Activated CD4-positive, alpha-beta T cell treated with anti-CD3 and anti-CD28 coated beads for 36 hours (primary cell): ENCODE measurements at regions of chr2 and their contacts with region 1.

Region 1: DNA sequence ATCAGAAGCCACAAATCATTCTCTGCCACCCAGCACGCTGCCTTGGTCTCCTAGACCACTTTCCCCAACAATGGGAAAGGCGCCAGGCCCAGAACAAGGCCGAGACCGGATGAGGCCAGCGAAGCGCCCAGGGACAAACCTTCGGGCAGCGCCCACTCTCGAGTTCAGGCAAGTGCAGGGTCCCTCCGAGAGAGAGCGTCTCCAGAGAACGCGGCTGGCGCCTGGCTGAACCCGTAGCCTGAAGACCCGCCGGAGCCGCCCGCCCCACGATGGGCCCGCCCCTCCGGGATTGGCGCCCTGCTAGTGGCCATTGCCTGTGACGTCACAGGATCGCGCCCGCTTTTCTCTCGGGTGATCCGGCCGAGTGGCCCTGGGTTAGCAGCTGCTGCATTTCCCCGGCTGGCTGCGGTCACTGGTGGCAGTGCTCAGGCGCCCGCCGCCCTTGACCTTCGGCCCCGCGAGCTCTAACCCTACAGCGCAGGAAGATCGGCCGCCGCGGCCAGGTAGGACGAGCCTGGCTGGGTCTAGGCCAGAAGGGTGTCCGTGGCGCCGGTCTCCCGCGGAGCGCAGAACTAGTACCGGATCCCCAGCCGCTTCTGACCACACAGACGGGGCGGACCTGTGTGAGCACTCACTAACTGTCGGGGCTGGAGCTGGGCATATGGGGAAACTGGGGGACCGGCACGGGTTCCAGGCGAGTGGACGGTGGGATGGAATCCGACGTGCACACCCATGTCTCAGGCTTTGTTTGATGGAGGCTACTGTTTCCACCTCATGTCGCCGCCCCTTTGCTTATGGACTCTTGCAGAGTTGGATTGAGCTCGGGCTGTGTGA is at the start of gene FAHD2A:
- DNase-seq: peak; percentile 98
- ATAC-seq: peak; percentile 95
- H3K4me3 Mint-ChIP-seq: peak within 1 kb of the TSS; percentile 91
- H3K27ac Mint-ChIP-seq: peak within 1 kb of the TSS; percentile 95
- H3K4me1 Mint-ChIP-seq: peaks cover 16% of the 10 kb centered on the region
- H3K27me3 Mint-ChIP-seq: no peaks in the 10 kb centered on the region
- total RNA-seq, gene FAHD2A: 37.9 to 41.2 TPM

Region 2: GRCh38 chr2:95165129-95166064 is 237.2 kb before region 1 on chr2 and contains the start of gene ZNF2:
- CTCF ChIA-PET with region 1: no interaction called
- POLR2A ChIA-PET with region 1: no interaction called
- intact Hi-C with region 1: loop called (anchors 1 to 2 kb)
- DNase-seq: peak; percentile 98
- ATAC-seq: peak; percentile 98
- H3K4me3 Mint-ChIP-seq: peak within 1 kb of the TSS; percentile 96
- H3K27ac Mint-ChIP-seq: peak within 1 kb of the TSS; percentile 94
- H3K4me1 Mint-ChIP-seq: peaks cover 24% of the 10 kb centered on the region
- H3K27me3 Mint-ChIP-seq: no peaks in the 10 kb centered on the region
- total RNA-seq, gene ZNF2: 4.3 to 5.1 TPM

Region 3: GRCh38 chr2:95345566-95346230 is 56.9 kb before region 1 on chr2:
- CTCF ChIA-PET with region 1: interaction called, 7 read pairs
- POLR2A ChIA-PET with region 1: no interaction called
- intact Hi-C with region 1: loop called in 1 of 2 experiments (anchors 2 kb)
- DNase-seq: peak; percentile 82
- ATAC-seq: peak; percentile 91
- H3K4me3 Mint-ChIP-seq: peak overlapping the region; percentile 66
- H3K27ac Mint-ChIP-seq: no peak overlapping the region
- H3K4me1 Mint-ChIP-seq: no peaks in the 10 kb centered on the region
- H3K27me3 Mint-ChIP-seq: peaks cover 34% of the 10 kb centered on the region

Region 4: DNA sequence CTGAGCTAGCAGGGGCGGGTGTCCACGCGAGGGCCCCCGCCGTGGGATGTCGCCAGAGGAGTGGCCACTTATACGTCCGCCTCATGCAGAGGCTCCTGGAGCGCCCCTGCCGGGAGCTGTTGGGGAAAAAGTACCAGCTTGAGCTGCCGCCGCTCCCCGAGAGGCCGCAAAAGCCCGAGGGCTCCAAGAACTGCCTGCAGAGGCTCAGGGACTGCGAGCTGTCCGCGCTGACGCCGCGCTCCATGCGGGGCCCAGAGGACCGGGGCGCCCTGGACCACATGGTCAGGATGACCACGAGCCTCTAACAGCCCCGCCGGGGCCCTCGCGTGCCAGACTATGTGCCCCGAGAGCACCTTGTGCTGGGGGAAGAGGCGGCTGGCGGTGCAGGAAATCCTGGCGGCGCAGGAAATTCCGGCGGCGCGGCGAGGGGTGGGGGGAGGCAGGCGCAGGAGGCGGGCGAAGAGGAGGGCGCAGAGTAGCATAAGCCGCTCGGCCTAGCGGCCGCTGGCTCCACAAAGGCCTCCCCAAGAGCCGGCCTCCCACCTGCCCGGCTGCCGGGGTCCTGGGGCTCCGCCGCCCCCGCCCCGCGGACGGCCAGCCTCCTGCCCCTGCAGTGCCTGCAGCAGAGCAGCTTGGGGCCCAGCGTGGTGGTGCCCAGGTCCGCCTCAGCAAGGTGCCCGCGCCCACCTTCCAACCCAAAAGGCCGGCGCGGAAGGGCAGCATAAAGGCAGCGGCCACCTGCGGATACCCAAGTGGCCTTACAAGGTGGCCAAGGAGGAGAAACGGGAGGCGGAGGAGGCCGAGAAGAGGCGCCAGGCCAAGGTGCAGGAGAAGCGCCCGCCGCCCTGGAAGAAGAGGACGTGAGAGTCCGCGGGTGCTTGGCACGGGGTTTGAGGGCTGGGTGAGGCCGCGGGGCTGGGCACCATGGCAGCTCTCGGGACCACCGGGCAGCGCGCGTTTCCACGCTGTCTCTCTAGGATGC is 124.1 kb after region 1 on chr2:
- CTCF ChIA-PET with region 1: no interaction called
- POLR2A ChIA-PET with region 1: no interaction called
- intact Hi-C with region 1: loop called in 1 of 2 experiments (anchors 5 kb)
- DNase-seq: peak; percentile 78
- ATAC-seq: peak; percentile 62
- H3K4me3 Mint-ChIP-seq: peak overlapping the region; percentile 84
- H3K27ac Mint-ChIP-seq: peak overlapping the region; percentile 75
- H3K4me1 Mint-ChIP-seq: peaks cover 25% of the 10 kb centered on the region
- H3K27me3 Mint-ChIP-seq: no peaks in the 10 kb centered on the region